Heart right ventricle (tissue), 16 donors: ENCODE measurements at regions of chr6 and their contacts with region 1.

Region 1: GRCh38 chr6:120230010-120230409 is 880.4 kb upstream of the MAN1A1 start:
- DNase-seq: no peak
- ATAC-seq: no peak
- H3K4me3 ChIP-seq: no peak overlapping the region
- H3K27ac ChIP-seq: no peak overlapping the region
- H3K4me1 ChIP-seq: no peaks in the 10 kb centered on the region
- H3K27me3 ChIP-seq: no peaks in the 10 kb centered on the region
- CTCF ChIP-seq: no peak

Region 2: DNA sequence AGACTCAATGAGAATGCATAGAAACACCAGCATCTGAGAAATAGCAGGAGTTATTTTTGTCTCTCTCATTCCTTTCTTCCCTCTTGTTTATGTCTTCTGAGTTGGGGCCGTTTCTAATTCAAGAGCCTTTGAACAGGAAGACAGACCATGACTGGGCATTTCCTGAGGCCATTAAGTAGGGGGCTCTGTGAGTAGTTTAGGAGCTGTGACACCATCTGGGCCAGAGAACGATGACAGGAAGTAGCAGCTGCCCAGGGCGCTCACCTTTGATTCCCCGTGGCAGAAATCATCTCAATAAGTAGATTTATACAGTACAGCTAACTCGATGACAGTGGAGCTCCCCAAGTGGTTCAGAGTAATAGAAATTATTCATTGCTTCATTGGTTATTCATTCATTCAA is 1980.3 kb before region 1 on chr6:
- intact Hi-C with region 1: loop called in 1 of 10 experiments (anchors 5 kb)
- DNase-seq: no peak
- ATAC-seq: no peak
- H3K4me3 ChIP-seq: no peak overlapping the region
- H3K27ac ChIP-seq: no peak overlapping the region
- H3K4me1 ChIP-seq: no peaks in the 10 kb centered on the region
- H3K27me3 ChIP-seq: peaks cover 0 to 3% (median 0%) of the 10 kb centered on the region in 7 donors
- CTCF ChIP-seq: no peak

Region 3: DNA sequence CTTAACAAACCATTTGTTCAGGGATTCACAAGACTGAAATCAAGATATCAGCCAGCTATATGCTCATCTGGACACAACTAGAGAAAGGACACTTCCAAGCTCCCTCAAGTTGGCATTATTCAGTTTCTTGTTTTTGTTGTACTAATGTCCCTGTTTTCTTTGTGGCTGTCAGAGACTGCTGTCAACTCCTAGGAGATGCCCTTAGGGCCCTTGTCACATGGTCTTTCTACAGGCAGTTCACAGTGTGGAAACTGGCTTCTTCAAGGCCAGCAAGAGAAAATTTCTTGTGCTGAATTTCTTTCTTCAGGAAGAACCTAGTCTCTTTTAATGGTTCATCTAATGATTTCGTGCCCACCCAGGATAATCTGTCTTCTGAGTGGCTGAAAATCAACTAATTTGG is 203.2 kb before region 1 on chr6:
- intact Hi-C with region 1: no loop called
- DNase-seq: no peak
- ATAC-seq: no peak
- H3K4me3 ChIP-seq: no peak overlapping the region
- H3K27ac ChIP-seq: no peak overlapping the region
- H3K4me1 ChIP-seq: no peaks in the 10 kb centered on the region
- H3K27me3 ChIP-seq: no peaks in the 10 kb centered on the region
- CTCF ChIP-seq: no peak